H1 (cell line): ENCODE measurements at regions of chr22 and their contacts with region 1.

Region 1: DNA sequence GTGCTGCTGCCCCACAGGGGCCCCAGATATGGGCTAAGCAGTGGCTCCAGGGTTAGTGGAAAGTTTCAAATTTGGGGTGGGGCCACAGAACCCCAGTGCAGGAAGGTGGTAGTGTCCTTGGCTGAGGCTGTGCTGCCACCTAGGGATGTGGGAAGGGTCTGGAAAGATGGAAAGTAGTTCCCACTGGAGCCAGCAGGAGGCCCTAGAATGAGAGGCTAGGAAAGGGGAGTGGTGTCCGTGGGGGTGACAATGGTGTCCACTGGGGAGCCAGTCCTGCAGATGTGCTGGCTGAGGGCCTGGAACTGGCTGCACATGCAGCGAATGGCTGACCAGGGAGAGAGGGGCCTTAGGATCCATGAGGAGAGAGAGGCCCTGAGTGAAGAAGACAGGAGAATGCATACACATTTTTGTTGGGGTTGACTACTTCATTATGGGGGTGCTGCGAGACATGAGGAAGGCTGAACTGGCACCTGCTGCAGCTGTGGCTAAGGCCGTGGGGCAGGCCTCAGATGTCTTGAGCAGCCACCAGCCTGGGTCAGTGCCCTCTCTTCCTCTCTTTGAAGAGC is 21.1 kb downstream of the RFPL3 start:
- DNase-seq: peak in 1 of 2 experiments; percentile 91
- H3K4me3 ChIP-seq: no peak overlapping the region
- H3K27ac ChIP-seq: no peak overlapping the region
- H3K4me1 ChIP-seq: no peaks in the 10 kb centered on the region
- H3K27me3 ChIP-seq: no peaks in the 10 kb centered on the region; a peak in 1 of 7 replicates
- CTCF ChIP-seq: peak; percentile 99 to 100 (median 99)
- EP300 ChIP-seq: no peak
- POLR2A ChIP-seq: no peak
- RAD21 ChIP-seq: peak; percentile 95 to 97

Region 2: GRCh38 chr22:32202539-32203180 is 176.1 kb before region 1 on chr22:
- CTCF ChIA-PET with region 1: interaction called, 14 read pairs
- POLR2A ChIA-PET with region 1: no interaction called
- DNase-seq: peak in 1 of 2 experiments; percentile 59
- H3K4me3 ChIP-seq: peak overlapping the region in 3 of 4 experiments; percentile 47 to 61 (median 56); a peak in 4 of 8 replicates
- H3K27ac ChIP-seq: no peak overlapping the region
- H3K4me1 ChIP-seq: peaks cover 0 to 32% (median 15%) of the 10 kb centered on the region in 4 experiments; a peak in 5 of 7 replicates
- H3K27me3 ChIP-seq: peaks cover 19 to 50% (median 42%) of the 10 kb centered on the region in 4 experiments
- CTCF ChIP-seq: peak; percentile 77 to 89 (median 87)
- EP300 ChIP-seq: no peak
- POLR2A ChIP-seq: no peak
- RAD21 ChIP-seq: peak; percentile 58 to 68

Region 3: DNA sequence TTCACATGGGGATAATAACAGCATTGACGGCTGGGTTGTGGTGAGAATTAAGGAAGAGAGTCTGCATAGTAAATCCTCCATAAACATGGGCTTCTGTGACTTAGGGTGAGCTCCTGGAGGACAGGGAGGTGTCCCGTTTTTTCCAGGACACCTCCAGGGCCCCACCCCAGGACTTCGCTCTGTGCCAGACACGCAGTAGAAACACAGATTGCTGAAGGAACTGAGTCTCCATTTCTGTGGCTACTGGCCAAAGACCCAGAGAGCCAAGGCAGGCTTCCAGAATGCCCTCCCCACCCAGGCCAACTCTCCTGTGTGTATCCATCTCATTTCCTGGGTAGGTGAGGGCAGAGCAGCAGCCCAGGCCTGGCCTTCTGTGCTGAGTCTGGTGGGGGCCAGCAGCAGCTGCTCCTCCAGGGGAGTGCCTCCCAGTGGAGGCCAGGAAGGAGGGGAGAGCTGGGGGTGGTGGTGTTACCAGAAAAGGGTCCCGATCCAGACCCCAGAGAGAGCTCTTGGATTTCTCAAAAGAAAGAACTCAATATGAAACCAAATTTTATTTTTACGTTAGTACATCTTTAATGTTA is 30.7 kb before region 1 on chr22:
- CTCF ChIA-PET with region 1: interaction called, 11 read pairs
- POLR2A ChIA-PET with region 1: no interaction called
- DNase-seq: no peak
- H3K4me3 ChIP-seq: no peak overlapping the region
- H3K27ac ChIP-seq: no peak overlapping the region
- H3K4me1 ChIP-seq: no peaks in the 10 kb centered on the region; a peak in 1 of 7 replicates
- H3K27me3 ChIP-seq: no peaks in the 10 kb centered on the region
- CTCF ChIP-seq: no peak
- EP300 ChIP-seq: no peak
- POLR2A ChIP-seq: no peak
- RAD21 ChIP-seq: no peak

Region 4: GRCh38 chr22:32389685-32390084 is 10.9 kb after region 1 on chr22:
- CTCF ChIA-PET with region 1: interaction called, 30 read pairs
- POLR2A ChIA-PET with region 1: no interaction called
- DNase-seq: peak in 1 of 2 experiments; percentile 59
- H3K4me3 ChIP-seq: no peak overlapping the region
- H3K27ac ChIP-seq: no peak overlapping the region
- H3K4me1 ChIP-seq: no peaks in the 10 kb centered on the region
- H3K27me3 ChIP-seq: no peaks in the 10 kb centered on the region
- CTCF ChIP-seq: peak; percentile 44 to 55 (median 46); a peak in 3 of 4 replicates
- EP300 ChIP-seq: no peak
- POLR2A ChIP-seq: no peak
- RAD21 ChIP-seq: peak; percentile 47 to 55; a peak in 3 of 4 replicates

Region 5: GRCh38 chr22:32489377-32489776 is 110.6 kb after region 1 on chr22:
- CTCF ChIA-PET with region 1: no interaction called
- POLR2A ChIA-PET with region 1: no interaction called
- DNase-seq: no peak
- H3K4me3 ChIP-seq: no peak overlapping the region
- H3K27ac ChIP-seq: no peak overlapping the region
- H3K4me1 ChIP-seq: no peaks in the 10 kb centered on the region
- H3K27me3 ChIP-seq: no peaks in the 10 kb centered on the region
- CTCF ChIP-seq: no peak
- EP300 ChIP-seq: no peak
- POLR2A ChIP-seq: no peak
- RAD21 ChIP-seq: no peak